CD8-positive, alpha-beta T cell (primary cell): ENCODE measurements at regions of chr17 and their contacts with region 1.

Region 1: DNA sequence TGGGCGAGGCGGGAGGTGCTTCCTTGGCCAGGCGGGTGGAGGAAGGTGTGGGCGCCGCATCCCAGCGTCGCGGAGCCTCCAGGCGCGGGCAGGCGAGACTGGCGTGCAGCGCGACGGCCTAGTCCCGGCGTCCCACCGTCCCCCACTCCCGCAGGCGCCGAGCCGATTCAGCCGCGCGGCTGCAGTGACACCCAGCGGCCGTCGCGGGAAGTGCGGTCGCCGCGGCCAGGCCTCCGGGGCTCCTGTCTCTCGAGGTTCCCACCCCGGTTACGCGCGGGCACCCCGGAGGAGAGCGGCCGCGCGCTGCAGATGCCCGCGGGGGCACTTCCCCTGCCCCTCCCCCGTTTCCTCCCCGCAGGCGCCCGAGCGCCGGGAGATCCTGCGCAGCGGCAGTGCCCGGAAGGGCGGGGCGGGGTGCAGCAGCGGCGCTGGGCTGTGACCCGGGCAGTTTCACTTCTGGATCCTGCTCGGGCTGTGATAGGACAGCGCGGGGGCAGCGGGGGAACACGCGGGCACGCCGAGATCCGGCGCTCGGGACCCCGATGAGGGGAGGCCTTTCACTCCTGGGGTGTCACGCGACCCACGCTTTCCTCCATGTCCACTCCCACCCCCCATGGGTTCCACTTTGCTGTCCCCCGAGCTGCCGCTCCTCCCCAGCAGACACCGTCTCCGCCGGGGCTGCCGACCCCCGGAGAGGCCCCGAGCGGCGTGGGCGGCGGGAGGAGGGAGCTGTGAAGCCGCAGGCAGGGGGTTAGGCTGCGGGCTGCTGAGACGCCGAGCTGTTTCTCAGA is 16.6 kb downstream of the GRB7 start:
- DNase-seq: peak; percentile 95 to 99 (median 97)
- ATAC-seq: peak; percentile 74
- H3K4me3 ChIP-seq: peak overlapping the region; percentile 64 to 75
- H3K4me3 Mint-ChIP-seq: peak overlapping the region; percentile 78
- H3K27ac ChIP-seq: peak overlapping the region; percentile 93 to 97
- H3K27ac Mint-ChIP-seq: peak overlapping the region; percentile 98
- H3K4me1 ChIP-seq: peaks cover 56% of the 10 kb centered on the region
- H3K4me1 Mint-ChIP-seq: peaks cover 59% of the 10 kb centered on the region
- H3K27me3 ChIP-seq: no peaks in the 10 kb centered on the region
- H3K27me3 Mint-ChIP-seq: no peaks in the 10 kb centered on the region
- CTCF ChIP-seq: peak; percentile 91

Region 2: DNA sequence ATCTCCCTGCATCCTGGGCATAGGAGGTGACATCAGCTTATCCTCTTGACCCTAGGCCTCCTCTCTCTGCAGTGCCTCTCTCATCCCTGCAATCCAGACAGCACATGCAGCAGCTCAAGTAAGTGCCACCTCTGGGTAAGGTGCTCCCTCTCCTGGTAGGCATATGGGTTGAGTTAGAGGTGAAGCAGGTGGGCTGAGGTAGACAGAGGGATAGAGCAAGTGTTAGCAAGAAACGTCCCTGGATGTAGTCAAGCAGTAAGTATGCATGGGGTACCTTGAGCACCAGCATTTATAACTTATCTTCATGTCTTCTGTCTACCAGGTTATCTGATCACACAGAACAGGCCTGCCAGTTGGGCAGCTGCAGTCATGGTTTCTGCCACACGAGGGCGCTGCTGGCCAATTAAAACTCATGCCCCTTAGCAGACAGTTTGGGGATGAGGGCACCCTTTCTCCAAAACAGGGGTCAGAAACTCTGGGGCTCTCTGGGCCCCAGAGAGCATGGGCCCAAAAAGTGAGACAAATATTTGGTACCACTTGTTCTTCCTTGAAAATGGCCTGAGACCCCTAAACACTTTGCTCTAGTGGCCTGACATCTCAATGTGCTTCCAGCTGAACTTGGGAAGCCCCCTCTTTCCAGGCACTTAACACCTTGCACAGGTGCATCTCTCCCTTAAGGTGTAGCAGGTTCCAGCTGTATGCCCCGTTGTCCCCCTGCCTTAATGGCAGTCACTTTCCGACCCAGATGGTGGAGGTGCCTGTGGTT is 206.5 kb before region 1 on chr17:
- CTCF ChIA-PET with region 1: interaction called, 3 read pairs
- POLR2A ChIA-PET with region 1: no interaction called
- intact Hi-C with region 1: loop called (anchors 1 to 5 kb)
- DNase-seq: peak; percentile 66 to 85 (median 73)
- ATAC-seq: peak; percentile 89
- H3K4me3 ChIP-seq: no peak overlapping the region
- H3K4me3 Mint-ChIP-seq: no peak overlapping the region
- H3K27ac ChIP-seq: no peak overlapping the region
- H3K27ac Mint-ChIP-seq: no peak overlapping the region
- H3K4me1 ChIP-seq: no peaks in the 10 kb centered on the region
- H3K4me1 Mint-ChIP-seq: no peaks in the 10 kb centered on the region
- H3K27me3 ChIP-seq: no peaks in the 10 kb centered on the region
- H3K27me3 Mint-ChIP-seq: no peaks in the 10 kb centered on the region
- CTCF ChIP-seq: peak; percentile 84

Region 3: GRCh38 chr17:39730095-39730921 is 24.0 kb before region 1 on chr17 and contains the start of gene MIEN1:
- CTCF ChIA-PET with region 1: interaction called, 28 read pairs
- POLR2A ChIA-PET with region 1: interaction called, 39 read pairs
- intact Hi-C with region 1: loop called (anchors 1 kb)
- DNase-seq: peak; percentile 89 to 99 (median 95)
- ATAC-seq: peak; percentile 93
- H3K4me3 ChIP-seq: peak within 1 kb of the TSS; percentile 64 to 72
- H3K4me3 Mint-ChIP-seq: peak within 1 kb of the TSS; percentile 90
- H3K27ac ChIP-seq: peak within 1 kb of the TSS; percentile 78 to 91
- H3K27ac Mint-ChIP-seq: peak within 1 kb of the TSS; percentile 94
- H3K4me1 ChIP-seq: peaks cover 17% of the 10 kb centered on the region
- H3K4me1 Mint-ChIP-seq: peaks cover 17% of the 10 kb centered on the region
- H3K27me3 ChIP-seq: no peaks in the 10 kb centered on the region
- H3K27me3 Mint-ChIP-seq: no peaks in the 10 kb centered on the region
- CTCF ChIP-seq: peak; percentile 98
- total RNA-seq, gene MIEN1: 29.5 to 30.1 TPM

Region 4: GRCh38 chr17:39794249-39794970 is 40.1 kb after region 1 on chr17:
- CTCF ChIA-PET with region 1: no interaction called
- POLR2A ChIA-PET with region 1: interaction called, 18 read pairs
- intact Hi-C with region 1: loop called in 1 of 2 experiments (anchors 1 kb)
- DNase-seq: peak in 4 of 9 experiments; percentile 28 to 73 (median 45)
- ATAC-seq: peak; percentile 67
- H3K4me3 ChIP-seq: peak overlapping the region in 1 of 2 experiments; percentile 1
- H3K4me3 Mint-ChIP-seq: peak overlapping the region; percentile 65
- H3K27ac ChIP-seq: peak overlapping the region; percentile 3 to 78
- H3K27ac Mint-ChIP-seq: peak overlapping the region; percentile 89
- H3K4me1 ChIP-seq: peaks cover 72% of the 10 kb centered on the region
- H3K4me1 Mint-ChIP-seq: peaks cover 75% of the 10 kb centered on the region
- H3K27me3 ChIP-seq: no peaks in the 10 kb centered on the region
- H3K27me3 Mint-ChIP-seq: no peaks in the 10 kb centered on the region
- CTCF ChIP-seq: no peak

Region 5: DNA sequence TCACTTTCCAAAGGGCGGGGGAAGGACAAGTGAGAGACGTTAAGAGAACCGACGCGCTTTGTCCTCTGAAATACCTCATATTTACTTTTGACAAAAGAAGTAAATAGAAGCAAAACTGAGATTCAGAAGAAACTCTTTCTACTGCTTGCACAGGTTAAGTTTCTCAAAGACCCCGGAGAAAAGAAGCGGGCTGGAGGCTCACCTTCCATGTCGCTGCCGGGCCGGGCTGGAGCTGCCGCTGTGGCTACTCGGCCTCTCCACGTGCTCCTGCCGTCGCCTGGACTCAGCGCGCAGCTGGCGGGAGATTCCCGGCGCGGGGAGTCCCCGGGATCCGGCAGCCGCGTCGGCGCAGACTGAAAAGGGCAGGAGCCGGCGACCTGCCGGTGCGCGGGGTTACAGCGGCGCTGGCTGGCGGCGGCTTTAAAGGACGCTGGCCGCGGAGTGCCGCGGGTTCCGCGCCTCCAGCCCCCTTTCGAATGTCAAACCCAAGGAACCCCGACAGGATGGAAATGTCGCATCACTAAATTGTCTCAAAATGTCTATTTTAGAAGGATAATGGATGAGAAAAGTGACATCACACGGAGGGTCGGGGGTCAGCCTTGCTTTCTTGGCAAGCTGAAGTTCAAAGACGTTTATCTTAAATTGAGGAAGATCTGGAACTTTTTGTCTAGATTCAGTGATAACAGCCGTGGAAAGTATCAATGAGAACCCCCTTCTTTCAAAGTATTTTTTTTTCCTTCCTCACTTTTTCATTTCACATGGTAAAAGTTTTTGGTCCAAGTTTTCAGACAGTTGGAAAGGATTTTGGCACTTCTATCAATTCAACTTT is 109.8 kb after region 1 on chr17 and contains the start of gene IKZF3:
- CTCF ChIA-PET with region 1: interaction called, 27 read pairs
- POLR2A ChIA-PET with region 1: interaction called, 59 read pairs
- intact Hi-C with region 1: loop called (anchors 1 kb)
- DNase-seq: peak; percentile 59 to 96 (median 78)
- ATAC-seq: peak; percentile 67
- H3K4me3 ChIP-seq: peak within 1 kb of the TSS; percentile 65 to 74
- H3K4me3 Mint-ChIP-seq: peak within 1 kb of the TSS; percentile 89
- H3K27ac ChIP-seq: peak within 1 kb of the TSS; percentile 92 to 94
- H3K27ac Mint-ChIP-seq: peak within 1 kb of the TSS; percentile 98
- H3K4me1 ChIP-seq: peaks cover 56% of the 10 kb centered on the region
- H3K4me1 Mint-ChIP-seq: peaks cover 61% of the 10 kb centered on the region
- H3K27me3 ChIP-seq: no peaks in the 10 kb centered on the region
- H3K27me3 Mint-ChIP-seq: no peaks in the 10 kb centered on the region
- CTCF ChIP-seq: peak; percentile 49
- total RNA-seq, gene IKZF3: 57.3 to 59.8 TPM

Region 6: DNA sequence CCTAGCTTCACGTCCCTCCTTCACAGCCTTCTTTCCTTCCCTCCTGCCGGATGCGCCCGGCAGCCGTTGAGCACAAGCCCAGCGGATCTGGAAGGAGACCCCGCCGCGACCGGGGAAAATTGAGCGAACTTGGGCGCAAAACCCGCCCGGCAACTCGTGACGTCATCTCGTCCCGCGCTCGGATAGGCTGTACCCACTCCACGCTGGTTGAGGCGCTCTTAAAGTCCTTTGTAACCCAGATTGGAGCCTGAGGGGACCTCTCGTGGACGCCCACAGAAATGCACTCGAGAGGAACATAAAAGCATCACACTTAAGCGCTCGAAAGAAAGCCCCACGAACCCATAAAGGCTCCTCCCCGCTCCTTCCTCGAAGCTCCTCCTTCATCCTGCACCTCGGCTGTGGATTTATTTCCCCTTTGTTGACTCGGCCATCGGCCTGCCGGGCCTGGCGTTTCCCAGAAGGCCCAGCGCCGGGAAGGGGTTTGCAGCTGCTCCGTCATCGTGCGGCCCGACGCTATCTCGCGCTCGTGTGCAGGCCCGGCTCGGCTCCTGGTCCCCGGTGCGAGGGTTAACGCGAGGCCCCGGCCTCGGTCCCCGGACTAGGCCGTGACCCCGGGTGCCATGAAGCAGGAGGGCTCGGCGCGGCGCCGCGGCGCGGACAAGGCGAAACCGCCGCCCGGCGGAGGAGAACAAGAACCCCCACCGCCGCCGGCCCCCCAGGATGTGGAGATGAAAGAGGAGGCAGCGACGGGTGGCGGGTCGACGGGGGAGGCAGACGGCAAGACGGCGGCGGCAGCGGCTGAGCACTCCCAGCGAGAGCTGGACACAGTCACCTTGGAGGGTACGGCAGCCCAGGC is 226.2 kb after region 1 on chr17 and contains the start of gene PSMD3:
- CTCF ChIA-PET with region 1: interaction called, 6 read pairs
- POLR2A ChIA-PET with region 1: interaction called, 8 read pairs
- intact Hi-C with region 1: loop called (anchors 1 kb)
- DNase-seq: peak; percentile 95 to 100 (median 97)
- ATAC-seq: peak; percentile 94
- H3K4me3 ChIP-seq: peak within 1 kb of the TSS; percentile 67 to 83
- H3K4me3 Mint-ChIP-seq: peak within 1 kb of the TSS; percentile 93
- H3K27ac ChIP-seq: peak within 1 kb of the TSS; percentile 90 to 91
- H3K27ac Mint-ChIP-seq: peak within 1 kb of the TSS; percentile 97
- H3K4me1 ChIP-seq: peaks cover 25% of the 10 kb centered on the region
- H3K4me1 Mint-ChIP-seq: peaks cover 33% of the 10 kb centered on the region
- H3K27me3 ChIP-seq: peaks cover 0 to 3% of the 10 kb centered on the region in 2 experiments
- H3K27me3 Mint-ChIP-seq: no peaks in the 10 kb centered on the region
- CTCF ChIP-seq: peak; percentile 67
- total RNA-seq, gene PSMD3: 66.9 to 68.8 TPM